Lower leg skin (tissue), 4 donors: ENCODE measurements at regions of chrX and their contacts with region 1.

Region 1: GRCh38 chrX:137916090-137916746 is 350.3 kb downstream of the ZIC3 start:
- DNase-seq: no peak
- H3K4me3 ChIP-seq: no peak overlapping the region
- CTCF ChIP-seq: no peak
- POLR2A ChIP-seq: no peak

Region 2: DNA sequence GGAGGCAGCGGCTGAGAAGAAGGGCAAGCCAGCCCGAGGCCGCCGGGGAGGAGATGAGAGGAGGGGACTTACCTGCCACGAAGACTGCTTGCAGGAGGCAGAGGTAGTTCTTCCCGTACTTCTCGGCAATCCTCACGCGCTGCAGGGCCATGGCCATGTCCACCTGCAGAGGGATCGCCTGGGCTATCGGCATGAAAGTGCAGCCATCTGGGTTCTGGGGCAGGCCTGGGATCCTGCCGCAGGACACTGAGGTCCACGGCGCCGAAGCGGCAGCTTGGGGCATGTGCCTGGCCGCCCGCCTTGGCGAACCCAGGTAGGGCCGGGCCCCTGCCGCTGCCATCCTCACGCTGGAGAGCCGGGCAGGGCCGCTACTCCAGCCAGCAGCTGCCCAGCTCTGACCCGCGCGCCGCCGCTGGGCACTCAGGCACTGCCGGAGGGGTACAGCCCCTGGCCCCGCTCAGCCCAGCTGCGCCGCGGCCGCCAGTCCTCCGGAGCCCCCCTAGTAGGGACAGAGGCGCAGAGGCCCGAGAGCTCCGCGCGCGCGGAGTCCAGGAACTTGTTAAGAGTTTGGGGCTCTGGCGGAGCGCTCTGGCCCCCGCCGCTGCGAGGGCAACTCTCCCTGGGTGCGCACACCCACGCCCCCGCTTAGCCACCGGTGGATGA is 1775.8 kb after region 1 on chrX:
- intact Hi-C with region 1: loop called (anchors 5 kb)
- DNase-seq: no peak
- H3K4me3 ChIP-seq: no peak overlapping the region
- CTCF ChIP-seq: no peak
- POLR2A ChIP-seq: no peak